Activated CD4-positive, alpha-beta memory T cell treated with anti-CD3 and anti-CD28 coated beads, Interleukin-2, amount 10 ng/mL, durations not matched to agents 7 days and 5 days (primary cell): ENCODE measurements at regions of chr5 and their contacts with region 1.

Region 1: DNA sequence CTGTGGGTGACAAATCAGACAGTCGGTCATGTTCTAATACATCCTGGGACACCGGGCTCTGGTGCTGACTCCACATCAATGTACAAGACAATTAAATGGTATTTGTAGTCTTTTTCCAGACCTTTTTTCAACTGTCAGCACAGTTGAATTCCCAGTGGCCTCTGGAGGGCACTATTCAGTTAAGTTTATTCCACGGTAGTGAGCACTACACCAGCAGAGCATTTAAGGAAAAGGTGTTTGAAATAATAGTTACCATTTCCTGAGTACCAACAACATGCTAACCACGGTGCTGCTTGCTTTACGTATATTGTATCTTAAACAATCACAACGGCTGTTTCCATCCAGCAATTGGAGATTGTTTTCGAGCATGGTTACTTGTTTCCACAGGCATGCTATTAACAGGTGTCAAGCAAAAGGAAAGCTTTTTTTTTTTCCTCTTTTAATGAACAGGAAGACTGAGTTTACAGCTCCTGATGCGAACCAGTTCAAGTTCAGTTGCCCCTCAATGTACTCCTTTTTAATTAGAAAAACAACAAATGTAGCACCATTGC is 186.7 kb downstream of the PDZD2 start:
- DNase-seq: peak; percentile 24
- H3K4me3 Mint-ChIP-seq: no peak overlapping the region
- H3K27ac Mint-ChIP-seq: no peak overlapping the region
- H3K4me1 Mint-ChIP-seq: peaks cover 2% of the 10 kb centered on the region
- H3K27me3 Mint-ChIP-seq: peaks cover 2% of the 10 kb centered on the region

Region 2: GRCh38 chr5:31671339-31671741 is 154.3 kb before region 1 on chr5:
- CTCF ChIA-PET with region 1: no interaction called
- POLR2A ChIA-PET with region 1: no interaction called
- DNase-seq: no peak
- H3K4me3 Mint-ChIP-seq: no peak overlapping the region
- H3K27ac Mint-ChIP-seq: no peak overlapping the region
- H3K4me1 Mint-ChIP-seq: no peaks in the 10 kb centered on the region
- H3K27me3 Mint-ChIP-seq: no peaks in the 10 kb centered on the region

Region 3: GRCh38 chr5:31844615-31845353 is 19.2 kb after region 1 on chr5:
- CTCF ChIA-PET with region 1: no interaction called
- POLR2A ChIA-PET with region 1: no interaction called
- DNase-seq: no peak
- H3K4me3 Mint-ChIP-seq: no peak overlapping the region
- H3K27ac Mint-ChIP-seq: no peak overlapping the region
- H3K4me1 Mint-ChIP-seq: no peaks in the 10 kb centered on the region
- H3K27me3 Mint-ChIP-seq: no peaks in the 10 kb centered on the region

Region 4: DNA sequence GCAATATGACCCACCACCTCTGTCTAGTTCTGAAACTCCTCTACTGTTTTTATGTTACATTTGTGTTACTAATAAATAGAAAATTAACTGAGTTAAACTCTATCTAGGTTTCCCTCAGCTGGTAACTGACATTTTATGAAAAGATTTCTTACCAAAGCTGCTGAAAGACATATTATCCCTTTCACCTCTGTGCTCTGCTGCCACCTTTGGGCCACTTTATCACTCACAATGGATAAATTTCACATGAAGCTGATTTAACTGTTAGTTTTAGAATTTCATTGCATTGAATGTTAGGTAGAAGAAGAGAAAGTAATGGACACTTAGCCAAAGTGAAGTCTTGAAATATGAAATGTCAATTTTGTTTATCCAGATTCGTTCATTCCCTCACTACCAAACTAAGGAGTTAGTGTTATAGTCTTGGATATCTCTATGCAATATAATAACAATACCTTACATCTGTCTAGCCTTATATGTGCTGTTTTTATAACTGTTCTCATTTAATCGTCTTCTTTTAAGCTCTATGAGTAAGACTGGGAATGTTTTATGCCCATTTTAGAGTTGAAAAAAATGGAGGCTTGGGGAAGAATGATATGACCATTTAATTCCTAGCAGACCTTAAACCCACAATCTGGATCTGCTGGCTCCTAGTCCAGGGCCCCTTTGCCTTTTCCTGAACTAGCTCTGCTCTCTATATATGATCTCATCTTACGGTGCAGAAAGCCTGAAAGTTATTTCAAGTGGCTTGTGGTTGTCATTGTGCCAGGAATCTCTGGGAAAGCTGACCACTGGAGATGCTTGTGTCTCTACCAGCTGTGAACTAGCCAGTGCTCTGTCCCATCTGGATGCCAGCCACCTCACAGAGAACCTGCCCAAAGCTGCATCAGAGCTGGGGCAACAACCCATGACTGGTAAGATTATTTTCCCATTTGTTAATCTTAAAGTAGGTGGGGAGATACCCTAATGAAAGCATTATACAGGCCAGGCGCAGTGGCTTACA is 251.4 kb after region 1 on chr5:
- CTCF ChIA-PET with region 1: interaction called, 16 read pairs
- POLR2A ChIA-PET with region 1: no interaction called
- DNase-seq: peak; percentile 39
- H3K4me3 Mint-ChIP-seq: no peak overlapping the region
- H3K27ac Mint-ChIP-seq: no peak overlapping the region
- H3K4me1 Mint-ChIP-seq: no peaks in the 10 kb centered on the region
- H3K27me3 Mint-ChIP-seq: peaks cover 2% of the 10 kb centered on the region

Region 5: DNA sequence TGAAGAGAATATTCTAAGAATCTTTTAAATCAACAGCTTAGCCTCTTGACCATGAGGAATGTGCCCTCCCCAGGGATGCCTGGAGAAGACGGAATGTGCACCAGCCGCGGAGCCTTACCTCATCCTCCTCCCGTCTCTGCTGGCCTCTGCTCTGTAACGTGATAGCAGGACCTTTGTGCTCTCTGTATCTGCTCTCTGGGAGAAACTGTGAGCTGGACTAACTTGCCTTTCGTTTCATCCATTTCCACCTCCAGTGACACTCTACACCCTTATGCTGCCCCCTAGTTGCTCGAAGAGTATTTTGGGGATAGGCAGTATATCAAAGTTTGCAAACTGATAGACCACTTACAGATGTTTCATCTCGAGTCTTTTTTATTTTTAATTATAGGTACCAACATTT is 1026.9 kb after region 1 on chr5:
- CTCF ChIA-PET with region 1: no interaction called
- POLR2A ChIA-PET with region 1: no interaction called
- DNase-seq: no peak
- H3K4me3 Mint-ChIP-seq: no peak overlapping the region
- H3K27ac Mint-ChIP-seq: no peak overlapping the region
- H3K4me1 Mint-ChIP-seq: no peaks in the 10 kb centered on the region
- H3K27me3 Mint-ChIP-seq: no peaks in the 10 kb centered on the region